AG04450 (cell line): ENCODE measurements at regions of chr2 and their contacts with region 1.

Region 1: DNA sequence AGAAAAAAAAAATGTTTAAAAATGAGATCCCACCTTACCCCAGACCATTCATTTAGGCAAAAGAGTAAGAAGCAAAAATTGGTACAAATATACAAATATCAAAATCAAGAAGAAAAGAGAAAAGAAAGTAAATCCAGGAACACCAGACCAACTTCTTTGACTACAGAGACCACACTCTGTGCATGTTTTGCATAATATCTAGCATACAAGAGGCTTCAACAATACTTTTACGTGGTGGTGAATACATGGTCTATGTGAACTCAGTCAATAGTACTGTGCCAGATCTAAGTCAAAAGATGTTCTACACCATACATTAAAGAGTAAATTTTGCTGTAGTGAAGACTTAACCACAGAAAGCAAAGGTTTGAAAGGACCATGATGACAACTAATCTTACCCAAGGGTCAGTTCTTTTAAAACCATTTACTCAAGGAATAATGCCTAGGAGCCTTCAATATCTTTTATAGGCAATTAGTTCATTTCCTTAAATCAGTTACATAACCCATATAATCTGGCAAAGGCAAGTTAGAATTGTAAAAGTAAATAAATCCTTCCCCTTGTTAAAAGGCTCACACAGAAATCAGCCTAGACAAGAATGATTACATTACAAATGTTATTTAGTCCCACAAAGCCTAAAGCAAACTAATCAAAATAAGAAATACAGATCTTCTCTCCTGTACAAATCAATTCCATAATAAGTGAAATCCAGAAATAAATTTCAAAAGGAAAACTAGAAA is 115.2 kb downstream of the EXOC6B start:
- DNase-seq: no peak
- H3K4me3 ChIP-seq: no peak overlapping the region
- H3K27ac ChIP-seq: no peak overlapping the region
- H3K27me3 ChIP-seq: no peaks in the 10 kb centered on the region
- CTCF ChIP-seq: no peak

Region 2: GRCh38 chr2:72661985-72662384 is 48.6 kb before region 1 on chr2:
- CTCF ChIA-PET with region 1: no interaction called
- POLR2A ChIA-PET with region 1: interaction called, 13 read pairs
- DNase-seq: no peak
- H3K4me3 ChIP-seq: no peak overlapping the region
- H3K27ac ChIP-seq: no peak overlapping the region
- H3K27me3 ChIP-seq: no peaks in the 10 kb centered on the region
- CTCF ChIP-seq: no peak